ENCODE measurements at regions of chr1 and their contacts with region 1.

Region 1: GRCh38 chr1:24526940-24527542 is 24.4 kb downstream of the RCAN3 start:
- DNase-seq: peak in 9 of 10 donors; percentile 15 to 76 (median 56)
- ATAC-seq: peak; percentile 76 to 83
- H3K4me3 Mint-ChIP-seq: peak overlapping the region in 6 of 10 donors; percentile 26 to 72 (median 42)
- H3K27ac Mint-ChIP-seq: peak overlapping the region; percentile 66 to 96 (median 89)
- H3K4me1 Mint-ChIP-seq: peaks cover 35 to 74% (median 71%) of the 10 kb centered on the region in 4 donors
- H3K27me3 Mint-ChIP-seq: no peaks in the 10 kb centered on the region

Region 2: DNA sequence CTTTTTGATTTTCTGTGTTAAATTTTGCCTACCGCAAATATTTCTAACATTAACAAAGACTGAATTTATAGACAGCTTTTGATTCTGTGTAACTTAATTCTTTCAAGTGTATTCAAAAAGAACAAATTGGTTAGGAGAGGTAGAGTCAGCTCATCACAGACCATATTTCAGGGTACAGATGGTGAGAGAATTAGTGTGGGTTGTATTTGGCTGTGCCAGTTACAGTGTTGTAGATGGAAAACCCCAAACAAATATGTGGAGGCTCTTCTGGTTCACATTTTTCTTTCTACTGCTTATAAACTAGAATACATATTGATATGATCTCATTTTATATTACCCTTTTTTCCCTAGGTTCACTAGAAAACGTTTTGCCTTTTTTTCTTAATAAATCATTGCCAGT is 13.3 kb before region 1 on chr1:
- POLR2A ChIA-PET with region 1: interaction called, 12 read pairs
- DNase-seq: no peak
- ATAC-seq: peak in 1 of 2 donors; percentile 45
- H3K4me3 Mint-ChIP-seq: peak overlapping the region; percentile 38 to 86 (median 57)
- H3K27ac Mint-ChIP-seq: peak overlapping the region; percentile 23 to 98 (median 81)
- H3K4me1 Mint-ChIP-seq: peaks cover 38 to 92% (median 78%) of the 10 kb centered on the region in 4 donors
- H3K27me3 Mint-ChIP-seq: no peaks in the 10 kb centered on the region

Measured in naive thymus-derived CD8-positive, alpha-beta T cell (primary cell).